OCI-LY7 (cell line): ENCODE measurements at regions of chr11 and their contacts with region 1.

Region 1: GRCh38 chr11:86291466-86292262 is 10.4 kb upstream of the HIKESHI start:
- DNase-seq: peak; percentile 67
- H3K4me3 ChIP-seq: no peak overlapping the region
- H3K27ac ChIP-seq: no peak overlapping the region
- H3K4me1 ChIP-seq: no peaks in the 10 kb centered on the region
- CTCF ChIP-seq: peak; percentile 93

Region 2: DNA sequence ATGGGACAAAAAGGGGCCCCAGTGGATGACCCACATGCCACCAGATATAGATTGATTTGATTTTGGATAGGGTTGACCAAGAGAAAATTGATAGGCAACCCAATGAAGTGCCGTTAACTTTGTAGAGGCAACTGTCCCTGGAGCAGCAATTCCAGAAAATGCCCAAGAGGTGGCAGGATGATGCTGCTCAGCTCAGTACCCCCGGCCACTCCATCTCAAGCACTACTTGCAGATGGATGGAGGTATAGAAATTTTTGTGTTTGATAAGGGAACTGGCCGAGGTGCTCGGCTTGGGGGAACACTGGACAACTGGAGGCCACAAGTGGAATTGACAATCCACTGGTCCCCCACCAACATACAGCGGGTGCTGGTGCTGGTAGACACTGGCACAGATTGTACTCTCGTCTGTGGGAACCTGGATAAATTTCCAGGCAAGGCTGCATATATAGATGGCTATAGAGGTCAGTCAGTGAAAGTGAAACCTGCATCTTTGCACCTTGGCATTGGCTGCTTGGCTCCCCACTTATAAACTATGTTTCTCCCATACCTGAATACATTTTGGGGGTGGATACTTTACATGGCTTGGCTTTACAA is 350.2 kb before region 1 on chr11:
- CTCF ChIA-PET with region 1: no interaction called
- POLR2A ChIA-PET with region 1: interaction called, 4 read pairs
- intact Hi-C with region 1: loop called (anchors 2 kb)
- DNase-seq: peak; percentile 44
- H3K4me3 ChIP-seq: no peak overlapping the region
- H3K27ac ChIP-seq: no peak overlapping the region
- H3K4me1 ChIP-seq: no peaks in the 10 kb centered on the region
- CTCF ChIP-seq: peak; percentile 73

Region 3: GRCh38 chr11:86041975-86042378 is 249.7 kb before region 1 on chr11:
- CTCF ChIA-PET with region 1: no interaction called
- POLR2A ChIA-PET with region 1: no interaction called
- intact Hi-C with region 1: loop called (anchors 2 kb)
- DNase-seq: peak; percentile 79
- H3K4me3 ChIP-seq: no peak overlapping the region
- H3K27ac ChIP-seq: no peak overlapping the region
- H3K4me1 ChIP-seq: peaks cover 37% of the 10 kb centered on the region
- CTCF ChIP-seq: peak; percentile 99